ENCODE measurements at regions of chr4 and their contacts with region 1.

Region 1: GRCh38 chr4:46390355-46391058 is 579 bp upstream of the GABRA2 start:
- DNase-seq: no peak
- H3K4me3 Mint-ChIP-seq: no peak overlapping the region
- H3K27ac Mint-ChIP-seq: no peak overlapping the region
- H3K4me1 Mint-ChIP-seq: peaks cover 15% of the 10 kb centered on the region
- H3K27me3 Mint-ChIP-seq: peaks cover 28% of the 10 kb centered on the region

Region 2: DNA sequence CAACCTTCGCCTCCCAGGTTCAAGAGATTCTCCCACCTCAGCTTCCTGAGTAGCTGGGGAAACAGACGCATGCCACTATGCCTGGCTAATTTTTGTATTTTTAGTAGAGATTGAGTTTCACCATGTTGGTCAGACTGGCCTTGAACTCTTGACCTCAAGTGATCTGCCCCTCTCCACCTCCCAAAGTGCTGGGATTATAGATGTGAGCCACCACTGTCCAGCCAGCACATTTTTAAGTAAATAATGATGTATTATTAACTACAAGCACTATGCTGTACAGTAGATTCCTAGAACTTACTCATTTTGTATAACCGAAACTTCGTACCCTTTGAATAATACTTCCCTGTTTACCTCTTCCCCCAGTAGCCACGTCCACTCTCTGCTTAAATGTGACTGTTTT is 170.6 kb before region 1 on chr4:
- CTCF ChIA-PET with region 1: no interaction called
- POLR2A ChIA-PET with region 1: no interaction called
- intact Hi-C with region 1: no loop called
- DNase-seq: no peak
- H3K4me3 Mint-ChIP-seq: no peak overlapping the region
- H3K27ac Mint-ChIP-seq: no peak overlapping the region
- H3K4me1 Mint-ChIP-seq: no peaks in the 10 kb centered on the region
- H3K27me3 Mint-ChIP-seq: no peaks in the 10 kb centered on the region

Region 3: DNA sequence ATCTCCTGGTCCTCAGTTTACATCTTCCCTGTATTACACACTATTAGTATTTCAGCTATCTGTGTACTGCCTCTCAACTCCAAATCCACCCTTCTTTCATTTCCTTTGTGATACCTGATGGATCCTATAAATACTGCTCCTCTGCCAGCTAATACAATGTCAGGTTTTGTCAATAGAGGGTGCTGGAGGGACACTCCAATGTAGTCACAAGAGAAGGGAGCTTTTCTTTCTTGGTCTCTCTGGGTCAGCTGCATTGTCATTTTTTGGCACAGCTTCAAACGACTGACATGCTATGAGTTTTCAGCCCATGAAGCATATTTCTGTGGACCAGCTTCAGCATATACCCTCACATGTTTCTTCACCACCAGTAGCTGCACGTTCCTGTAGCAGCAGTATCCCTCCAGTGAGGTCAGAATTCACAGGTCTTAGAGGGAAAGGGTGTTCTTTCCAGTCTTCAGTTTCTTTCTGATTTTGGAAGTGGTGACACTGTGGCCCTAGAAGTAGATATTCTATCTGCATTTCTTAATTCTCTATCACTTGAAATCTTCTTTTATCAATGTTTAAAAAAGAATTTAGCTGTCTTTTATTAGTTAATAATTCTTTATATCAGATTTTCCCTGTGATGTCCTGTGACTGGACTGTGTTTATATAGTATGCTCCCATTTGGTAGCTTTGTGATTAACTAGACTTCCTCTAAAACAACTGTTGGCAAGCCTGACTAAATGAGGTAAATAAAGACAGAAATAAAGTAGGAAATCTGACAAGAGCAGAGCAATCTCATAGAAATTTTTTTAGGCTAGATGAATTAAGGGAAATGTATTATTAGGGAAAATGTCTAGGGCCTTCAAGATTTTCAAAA is 61.2 kb before region 1 on chr4:
- CTCF ChIA-PET with region 1: no interaction called
- POLR2A ChIA-PET with region 1: no interaction called
- intact Hi-C with region 1: loop called (anchors 10 kb)
- DNase-seq: no peak
- H3K4me3 Mint-ChIP-seq: no peak overlapping the region
- H3K27ac Mint-ChIP-seq: no peak overlapping the region
- H3K4me1 Mint-ChIP-seq: no peaks in the 10 kb centered on the region
- H3K27me3 Mint-ChIP-seq: no peaks in the 10 kb centered on the region

Region 4: GRCh38 chr4:46404981-46405380 is 14.5 kb after region 1 on chr4:
- CTCF ChIA-PET with region 1: no interaction called
- POLR2A ChIA-PET with region 1: no interaction called
- intact Hi-C with region 1: no loop called
- DNase-seq: no peak
- H3K4me3 Mint-ChIP-seq: no peak overlapping the region
- H3K27ac Mint-ChIP-seq: no peak overlapping the region
- H3K4me1 Mint-ChIP-seq: no peaks in the 10 kb centered on the region
- H3K27me3 Mint-ChIP-seq: no peaks in the 10 kb centered on the region